Aorta (tissue), 5 donors: ENCODE measurements at regions of chrX and their contacts with region 1.

Region 1: GRCh38 chrX:55907968-55908607 is 190.5 kb downstream of the RRAGB start:
- DNase-seq: peak; percentile 68 to 80
- ATAC-seq: peak; percentile 76
- H3K4me3 ChIP-seq: peak overlapping the region; percentile 78 to 86
- H3K27ac ChIP-seq: peak overlapping the region in 1 of 2 donors; percentile 54
- H3K4me1 ChIP-seq: peaks cover 0 to 2% of the 10 kb centered on the region in 2 donors
- H3K27me3 ChIP-seq: no peaks in the 10 kb centered on the region

Region 2: GRCh38 chrX:55335296-55335695 is 572.8 kb before region 1 on chrX:
- intact Hi-C with region 1: no loop called
- DNase-seq: no peak
- ATAC-seq: no peak
- H3K4me3 ChIP-seq: no peak overlapping the region
- H3K27ac ChIP-seq: no peak overlapping the region
- H3K4me1 ChIP-seq: no peaks in the 10 kb centered on the region
- H3K27me3 ChIP-seq: no peaks in the 10 kb centered on the region

Region 3: GRCh38 chrX:56232221-56233082 is 324.4 kb after region 1 on chrX and contains the start of gene KLF8:
- intact Hi-C with region 1: loop called in 1 of 2 experiments (anchors 10 kb)
- DNase-seq: peak in 1 of 2 donors; percentile 59
- ATAC-seq: peak; percentile 81
- H3K4me3 ChIP-seq: peak within 1 kb of the TSS; percentile 43 to 82
- H3K27ac ChIP-seq: peak within 1 kb of the TSS in 1 of 2 donors; percentile 65
- H3K4me1 ChIP-seq: no peaks in the 10 kb centered on the region
- H3K27me3 ChIP-seq: no peaks in the 10 kb centered on the region
- total RNA-seq, gene KLF8: 23.6 to 28.3 TPM